ENCODE measurements at regions of chr15 and their contacts with region 1.

Region 1: GRCh38 chr15:40338041-40338657 is 2.6 kb downstream of the CCDC9B start:
- DNase-seq: peak; percentile 67
- ATAC-seq: peak; percentile 96
- H3K4me3 Mint-ChIP-seq: no peak overlapping the region
- H3K27ac Mint-ChIP-seq: no peak overlapping the region
- H3K4me1 Mint-ChIP-seq: peaks cover 24% of the 10 kb centered on the region
- H3K27me3 Mint-ChIP-seq: no peaks in the 10 kb centered on the region
- CTCF ChIP-seq: peak; percentile 17

Region 2: GRCh38 chr15:39686000-39686613 is 652.0 kb before region 1 on chr15:
- CTCF ChIA-PET with region 1: interaction called, 6 read pairs
- POLR2A ChIA-PET with region 1: no interaction called
- intact Hi-C with region 1: loop called (anchors 5 kb)
- DNase-seq: no peak
- ATAC-seq: no peak
- H3K4me3 Mint-ChIP-seq: no peak overlapping the region
- H3K27ac Mint-ChIP-seq: no peak overlapping the region
- H3K4me1 Mint-ChIP-seq: no peaks in the 10 kb centered on the region
- H3K27me3 Mint-ChIP-seq: no peaks in the 10 kb centered on the region
- CTCF ChIP-seq: no peak

Region 3: GRCh38 chr15:40217159-40217824 is 120.9 kb before region 1 on chr15:
- CTCF ChIA-PET with region 1: interaction called, 22 read pairs
- POLR2A ChIA-PET with region 1: interaction called, 6 read pairs
- intact Hi-C with region 1: loop called (anchors 1 kb)
- DNase-seq: no peak
- ATAC-seq: peak; percentile 100
- H3K4me3 Mint-ChIP-seq: no peak overlapping the region
- H3K27ac Mint-ChIP-seq: no peak overlapping the region
- H3K4me1 Mint-ChIP-seq: no peaks in the 10 kb centered on the region
- H3K27me3 Mint-ChIP-seq: no peaks in the 10 kb centered on the region
- CTCF ChIP-seq: peak; percentile 41

Region 4: GRCh38 chr15:40229981-40230380 is 108.2 kb before region 1 on chr15:
- CTCF ChIA-PET with region 1: no interaction called
- POLR2A ChIA-PET with region 1: no interaction called
- intact Hi-C with region 1: no loop called
- DNase-seq: no peak
- ATAC-seq: no peak
- H3K4me3 Mint-ChIP-seq: no peak overlapping the region
- H3K27ac Mint-ChIP-seq: no peak overlapping the region
- H3K4me1 Mint-ChIP-seq: peaks cover 8% of the 10 kb centered on the region
- H3K27me3 Mint-ChIP-seq: no peaks in the 10 kb centered on the region
- CTCF ChIP-seq: no peak

Region 5: DNA sequence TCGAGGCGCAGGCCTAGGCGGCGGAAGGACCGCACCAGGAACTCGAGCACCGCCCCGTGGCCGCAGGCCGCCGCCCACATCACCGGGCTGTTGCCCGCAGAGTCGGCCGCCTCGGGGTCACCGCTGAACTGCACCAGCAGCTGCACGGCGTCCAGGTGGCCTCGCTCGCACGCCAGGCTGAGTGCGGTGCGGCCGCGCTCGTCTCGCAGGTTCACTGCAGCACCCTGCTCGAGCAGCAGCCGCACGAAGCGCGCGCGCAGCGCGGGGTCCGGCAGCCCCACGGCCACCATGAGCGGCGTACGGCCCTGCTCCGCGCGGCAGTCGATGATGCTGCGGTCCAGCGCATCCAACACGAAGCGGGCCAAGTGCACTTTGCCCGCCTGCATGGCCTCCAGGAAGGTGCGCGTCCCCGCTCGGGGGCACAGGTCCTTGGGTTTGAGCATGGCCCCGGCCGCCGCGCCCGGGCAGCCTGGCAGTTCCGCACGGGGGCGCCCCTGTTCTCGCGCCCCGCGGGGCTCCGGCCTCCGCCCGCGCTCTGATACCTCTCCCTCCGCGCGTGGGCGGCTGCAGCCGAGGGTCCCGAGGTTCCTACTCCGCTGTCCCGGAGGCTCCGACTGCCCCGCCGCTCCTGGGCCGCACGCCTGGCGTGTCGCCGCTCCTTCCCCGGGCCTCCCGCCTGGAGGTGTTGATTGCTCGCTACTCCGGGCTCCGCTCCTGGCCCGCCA is 55.8 kb before region 1 on chr15:
- CTCF ChIA-PET with region 1: interaction called, 187 read pairs
- POLR2A ChIA-PET with region 1: interaction called, 5 read pairs
- intact Hi-C with region 1: loop called (anchors 1 kb)
- DNase-seq: peak; percentile 67
- ATAC-seq: peak; percentile 66
- H3K4me3 Mint-ChIP-seq: peak overlapping the region; percentile 76
- H3K27ac Mint-ChIP-seq: no peak overlapping the region
- H3K4me1 Mint-ChIP-seq: peaks cover 17% of the 10 kb centered on the region
- H3K27me3 Mint-ChIP-seq: peaks cover 5% of the 10 kb centered on the region
- CTCF ChIP-seq: no peak

Region 6: GRCh38 chr15:40290918-40291574 is 47.1 kb before region 1 on chr15:
- CTCF ChIA-PET with region 1: interaction called, 41 read pairs
- POLR2A ChIA-PET with region 1: no interaction called
- intact Hi-C with region 1: no loop called
- DNase-seq: no peak
- ATAC-seq: no peak
- H3K4me3 Mint-ChIP-seq: no peak overlapping the region
- H3K27ac Mint-ChIP-seq: no peak overlapping the region
- H3K4me1 Mint-ChIP-seq: no peaks in the 10 kb centered on the region
- H3K27me3 Mint-ChIP-seq: no peaks in the 10 kb centered on the region
- CTCF ChIP-seq: no peak

Region 7: DNA sequence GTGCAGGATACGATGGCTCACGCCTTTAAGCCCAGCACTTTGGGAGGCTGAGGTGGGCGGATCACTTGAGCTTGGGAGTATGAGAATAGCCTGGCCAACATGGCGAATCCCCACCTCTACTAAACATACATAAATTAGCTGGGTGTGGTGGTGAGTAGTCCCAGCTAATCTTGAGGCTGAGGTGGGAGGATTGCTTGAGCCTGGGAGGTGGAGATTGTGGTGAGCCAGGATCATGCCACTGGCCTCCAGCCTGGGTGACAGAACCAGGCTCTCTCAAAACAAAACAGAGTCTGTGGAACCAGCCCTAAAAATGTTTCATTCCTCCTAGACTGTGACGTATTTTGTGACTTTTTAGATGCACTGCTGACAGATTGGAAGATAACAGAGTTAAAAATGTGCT is 322.5 kb after region 1 on chr15:
- CTCF ChIA-PET with region 1: no interaction called
- POLR2A ChIA-PET with region 1: no interaction called
- intact Hi-C with region 1: no loop called
- DNase-seq: no peak
- ATAC-seq: no peak
- H3K4me3 Mint-ChIP-seq: no peak overlapping the region
- H3K27ac Mint-ChIP-seq: no peak overlapping the region
- H3K4me1 Mint-ChIP-seq: peaks cover 4% of the 10 kb centered on the region
- H3K27me3 Mint-ChIP-seq: no peaks in the 10 kb centered on the region
- CTCF ChIP-seq: no peak

Region 8: DNA sequence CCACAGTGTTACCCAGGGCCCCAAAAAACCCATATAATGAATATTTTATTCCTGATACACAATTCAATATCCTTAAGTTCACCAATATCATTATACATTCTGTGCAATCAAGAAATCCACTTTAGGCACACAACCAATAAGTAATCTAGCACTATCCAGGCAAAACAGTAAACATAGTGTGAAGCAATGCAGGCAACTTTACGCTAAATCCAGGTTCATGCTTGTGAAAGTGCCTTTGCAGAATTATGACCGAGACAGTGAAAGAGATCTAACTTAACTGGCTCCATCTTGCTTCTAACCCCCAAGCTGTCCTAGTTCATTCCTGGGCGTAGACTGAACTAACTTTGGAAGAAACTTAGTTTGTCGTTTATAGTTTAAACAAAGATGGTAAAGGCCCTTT is 812.1 kb after region 1 on chr15:
- CTCF ChIA-PET with region 1: no interaction called
- POLR2A ChIA-PET with region 1: no interaction called
- intact Hi-C with region 1: no loop called
- DNase-seq: no peak
- ATAC-seq: no peak
- H3K4me3 Mint-ChIP-seq: no peak overlapping the region
- H3K27ac Mint-ChIP-seq: no peak overlapping the region
- H3K4me1 Mint-ChIP-seq: no peaks in the 10 kb centered on the region
- H3K27me3 Mint-ChIP-seq: no peaks in the 10 kb centered on the region
- CTCF ChIP-seq: no peak

Measured in activated B cell treated with CpG ODN at 0.5 μM for 24 hours (primary cell).